CD4-positive, alpha-beta memory T cell (primary cell): ENCODE measurements at regions of chr11 and their contacts with region 1.

Region 1: GRCh38 chr11:128522055-128522942 is 65.1 kb downstream of the ETS1 start:
- DNase-seq: peak; percentile 81 to 90 (median 87)
- H3K4me3 ChIP-seq: peak overlapping the region; percentile 50 to 92
- H3K4me3 Mint-ChIP-seq: peak overlapping the region; percentile 92 to 100 (median 97)
- H3K27ac ChIP-seq: peak overlapping the region; percentile 89
- H3K27ac Mint-ChIP-seq: peak overlapping the region; percentile 96 to 99 (median 98)
- H3K4me1 ChIP-seq: peaks cover 45% of the 10 kb centered on the region
- H3K4me1 Mint-ChIP-seq: peaks cover 33 to 59% (median 44%) of the 10 kb centered on the region in 4 donors
- H3K27me3 ChIP-seq: no peaks in the 10 kb centered on the region
- H3K27me3 Mint-ChIP-seq: no peaks in the 10 kb centered on the region

Region 2: GRCh38 chr11:127943763-127944162 is 578.5 kb before region 1 on chr11:
- CTCF ChIA-PET with region 1: no interaction called
- POLR2A ChIA-PET with region 1: no interaction called
- intact Hi-C with region 1: no loop called
- DNase-seq: no peak
- H3K4me3 ChIP-seq: no peak overlapping the region
- H3K4me3 Mint-ChIP-seq: no peak overlapping the region
- H3K27ac ChIP-seq: no peak overlapping the region
- H3K27ac Mint-ChIP-seq: no peak overlapping the region
- H3K4me1 ChIP-seq: no peaks in the 10 kb centered on the region
- H3K4me1 Mint-ChIP-seq: no peaks in the 10 kb centered on the region
- H3K27me3 ChIP-seq: no peaks in the 10 kb centered on the region
- H3K27me3 Mint-ChIP-seq: peaks cover 8 to 10% of the 10 kb centered on the region in 2 donors

Region 3: DNA sequence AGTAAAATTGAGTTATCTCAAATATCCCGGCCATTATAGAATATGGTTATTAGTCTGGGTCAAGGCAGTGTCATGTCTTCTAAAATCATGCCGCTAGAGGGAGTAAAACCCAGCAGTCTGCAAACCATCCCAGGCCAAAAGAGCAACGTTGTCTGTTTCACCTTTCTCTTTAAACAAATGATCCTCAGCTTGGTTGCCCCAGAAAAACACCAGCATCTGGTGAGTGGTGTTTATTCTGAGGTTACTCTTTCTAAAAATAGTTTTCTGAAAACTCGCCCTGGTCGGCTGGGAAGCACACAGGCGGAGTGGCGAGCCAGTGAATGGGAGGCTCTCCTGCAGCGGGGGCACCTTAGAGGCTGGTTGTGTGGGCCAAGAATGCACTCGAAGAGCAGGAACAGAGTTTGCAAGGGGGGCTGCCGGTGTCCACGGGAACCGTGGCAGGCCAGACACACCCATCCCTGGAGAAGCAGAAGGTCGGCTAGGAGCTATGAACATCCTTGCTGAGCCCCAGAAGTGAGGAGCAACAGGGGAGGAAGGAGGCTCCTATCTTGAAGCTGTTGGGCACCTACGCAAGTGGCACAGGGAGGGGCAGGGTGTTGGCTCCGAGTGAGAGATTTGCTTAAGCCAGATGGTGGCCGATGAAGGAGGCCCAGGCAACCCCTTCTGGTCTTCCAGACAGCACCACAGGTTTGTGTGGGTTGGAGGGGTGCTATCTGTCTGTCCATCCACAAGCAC is 232.0 kb before region 1 on chr11:
- CTCF ChIA-PET with region 1: interaction called, 42 read pairs
- POLR2A ChIA-PET with region 1: interaction called, 888 read pairs
- intact Hi-C with region 1: loop called (anchors 1 kb)
- DNase-seq: peak; percentile 84 to 89 (median 86)
- H3K4me3 ChIP-seq: peak overlapping the region; percentile 68
- H3K4me3 Mint-ChIP-seq: peak overlapping the region; percentile 87 to 95 (median 94)
- H3K27ac ChIP-seq: peak overlapping the region; percentile 90
- H3K27ac Mint-ChIP-seq: peak overlapping the region; percentile 98 to 100 (median 99)
- H3K4me1 ChIP-seq: peaks cover 89% of the 10 kb centered on the region
- H3K4me1 Mint-ChIP-seq: peaks cover 70 to 100% (median 84%) of the 10 kb centered on the region in 4 donors
- H3K27me3 ChIP-seq: no peaks in the 10 kb centered on the region
- H3K27me3 Mint-ChIP-seq: no peaks in the 10 kb centered on the region

Region 4: DNA sequence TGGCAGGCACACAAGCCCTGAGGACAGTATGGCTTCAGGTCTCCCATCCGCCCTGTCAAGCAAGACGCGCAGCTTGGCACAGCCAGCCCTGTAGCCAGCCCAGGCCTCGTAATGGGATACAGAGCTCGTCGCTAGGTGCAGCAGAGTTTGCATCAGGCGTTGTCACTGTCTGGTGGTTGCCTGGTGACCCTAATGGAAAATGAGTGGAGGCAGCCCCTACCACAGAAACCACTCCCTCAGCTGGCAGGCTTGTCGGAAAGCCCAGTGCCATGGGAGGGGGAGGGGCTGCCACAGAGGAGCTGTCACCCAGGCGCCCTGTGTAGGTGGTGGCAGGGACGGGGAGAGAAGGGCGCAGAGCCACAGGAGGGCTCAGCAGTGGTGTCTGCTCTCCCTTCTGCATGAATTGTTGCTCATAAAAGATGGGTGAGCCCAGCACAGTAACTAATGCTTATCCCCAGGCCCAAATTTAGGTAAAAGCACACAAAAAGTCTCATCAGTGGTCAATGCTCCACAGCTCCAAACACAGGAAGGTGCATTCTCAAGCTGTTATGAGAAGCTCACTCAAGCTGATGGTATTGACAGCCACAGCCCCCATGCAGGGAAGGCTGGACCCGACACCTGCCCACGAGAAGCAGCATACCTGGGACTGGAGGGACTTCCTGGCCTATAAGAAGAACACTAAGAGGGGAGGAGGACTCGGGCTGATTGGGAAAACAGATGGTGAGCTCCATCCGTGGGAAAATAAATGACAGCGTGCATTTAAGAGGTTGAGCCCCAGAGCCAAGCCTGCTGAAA is 99.5 kb before region 1 on chr11:
- CTCF ChIA-PET with region 1: no interaction called
- POLR2A ChIA-PET with region 1: interaction called, 12 read pairs
- intact Hi-C with region 1: no loop called
- DNase-seq: peak; percentile 84 to 95 (median 90)
- H3K4me3 ChIP-seq: peak overlapping the region in 1 of 2 donors; percentile 28
- H3K4me3 Mint-ChIP-seq: peak overlapping the region; percentile 48 to 81 (median 72)
- H3K27ac ChIP-seq: peak overlapping the region; percentile 50
- H3K27ac Mint-ChIP-seq: peak overlapping the region; percentile 97 to 100 (median 98)
- H3K4me1 ChIP-seq: peaks cover 26% of the 10 kb centered on the region
- H3K4me1 Mint-ChIP-seq: peaks cover 31 to 45% (median 40%) of the 10 kb centered on the region in 4 donors
- H3K27me3 ChIP-seq: no peaks in the 10 kb centered on the region
- H3K27me3 Mint-ChIP-seq: no peaks in the 10 kb centered on the region

Region 5: GRCh38 chr11:128497061-128497775 is 25.1 kb before region 1 on chr11:
- CTCF ChIA-PET with region 1: interaction called, 19 read pairs
- POLR2A ChIA-PET with region 1: interaction called, 1,148 read pairs
- intact Hi-C with region 1: no loop called
- DNase-seq: peak in 1 of 5 donors; percentile 65
- H3K4me3 ChIP-seq: peak overlapping the region; percentile 5 to 47
- H3K4me3 Mint-ChIP-seq: peak overlapping the region; percentile 78 to 97 (median 88)
- H3K27ac ChIP-seq: peak overlapping the region; percentile 89
- H3K27ac Mint-ChIP-seq: peak overlapping the region; percentile 82 to 99 (median 97)
- H3K4me1 ChIP-seq: peaks cover 99% of the 10 kb centered on the region
- H3K4me1 Mint-ChIP-seq: peaks cover 90 to 100% (median 95%) of the 10 kb centered on the region in 4 donors
- H3K27me3 ChIP-seq: no peaks in the 10 kb centered on the region
- H3K27me3 Mint-ChIP-seq: no peaks in the 10 kb centered on the region

Region 6: GRCh38 chr11:128610721-128611617 is 88.7 kb after region 1 on chr11:
- CTCF ChIA-PET with region 1: interaction called, 5 read pairs
- POLR2A ChIA-PET with region 1: interaction called, 21 read pairs
- intact Hi-C with region 1: no loop called
- DNase-seq: peak; percentile 52 to 67 (median 59)
- H3K4me3 ChIP-seq: peak overlapping the region; percentile 3 to 21
- H3K4me3 Mint-ChIP-seq: peak overlapping the region; percentile 42 to 84 (median 68)
- H3K27ac ChIP-seq: peak overlapping the region; percentile 45
- H3K27ac Mint-ChIP-seq: peak overlapping the region; percentile 80 to 96 (median 92)
- H3K4me1 ChIP-seq: peaks cover 44% of the 10 kb centered on the region
- H3K4me1 Mint-ChIP-seq: peaks cover 31 to 42% (median 38%) of the 10 kb centered on the region in 4 donors
- H3K27me3 ChIP-seq: no peaks in the 10 kb centered on the region
- H3K27me3 Mint-ChIP-seq: no peaks in the 10 kb centered on the region

Region 7: DNA sequence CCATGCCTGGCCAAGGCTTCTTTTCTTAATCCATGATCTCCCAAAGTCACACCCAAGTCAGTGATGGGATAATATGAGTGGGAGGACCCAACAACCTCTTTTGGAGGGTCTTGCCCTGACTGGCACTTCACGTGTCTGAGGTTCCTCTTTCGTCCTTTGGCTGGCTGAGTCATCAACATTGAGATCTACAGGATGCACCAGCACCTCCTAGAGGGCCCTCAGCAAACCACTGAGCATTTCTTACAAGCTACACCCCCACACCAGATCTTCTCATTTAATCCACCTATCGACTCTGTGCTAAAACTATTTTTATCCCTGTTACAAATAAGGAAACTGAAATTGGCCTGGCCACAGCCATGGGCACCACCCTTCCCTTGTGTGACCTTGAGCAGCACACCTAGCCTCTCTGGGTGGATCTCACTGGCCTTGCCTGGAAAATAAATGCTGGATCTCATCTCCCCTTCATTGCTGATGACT is 235.0 kb after region 1 on chr11:
- CTCF ChIA-PET with region 1: interaction called, 3 read pairs
- POLR2A ChIA-PET with region 1: interaction called, 3 read pairs
- intact Hi-C with region 1: loop called (anchors 5 kb)
- DNase-seq: peak; percentile 64 to 85 (median 72)
- H3K4me3 ChIP-seq: no peak overlapping the region
- H3K4me3 Mint-ChIP-seq: peak overlapping the region in 6 of 8 donors; percentile 8 to 82 (median 54)
- H3K27ac ChIP-seq: peak overlapping the region; percentile 34
- H3K27ac Mint-ChIP-seq: peak overlapping the region; percentile 77 to 96 (median 94)
- H3K4me1 ChIP-seq: peaks cover 70% of the 10 kb centered on the region
- H3K4me1 Mint-ChIP-seq: peaks cover 59 to 87% (median 76%) of the 10 kb centered on the region in 4 donors
- H3K27me3 ChIP-seq: no peaks in the 10 kb centered on the region
- H3K27me3 Mint-ChIP-seq: no peaks in the 10 kb centered on the region